Activated T-helper 1 cell treated with anti-CD3 and anti-CD28 coated beads, Interleukin-12 subunit alpha, Interleukin-12 subunit beta, Interleukin-2, Interleukin-4 antibody, amounts not matched to agents 30 ng/mL and 10 ng/mL and 1 ng/mL, durations not matched to agents 14 hours and 24 hours and 36 hours (primary cell): ENCODE measurements at regions of chr6 and their contacts with region 1.

Region 1: DNA sequence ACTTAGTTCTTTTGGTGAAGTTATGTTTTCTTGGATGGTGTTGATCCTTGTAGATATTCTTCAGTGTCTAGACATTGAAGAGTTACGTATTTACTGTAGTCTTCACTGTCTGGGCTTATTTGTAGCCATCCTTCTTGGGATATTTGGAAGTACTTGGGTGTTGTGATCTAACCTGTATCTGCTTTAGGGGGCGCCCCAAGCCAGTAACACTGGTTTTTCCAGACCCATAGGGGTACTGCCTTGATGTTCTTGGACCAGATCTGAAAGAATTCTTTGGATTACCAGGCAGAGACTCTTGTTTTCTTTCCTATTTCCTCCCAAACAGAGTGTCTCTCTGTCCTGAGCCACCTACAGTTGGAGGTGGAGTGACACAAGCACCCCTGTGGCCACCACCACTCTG is 309.1 kb upstream of the IMPG1 start:
- DNase-seq: no peak
- H3K4me3 Mint-ChIP-seq: no peak overlapping the region
- H3K27ac Mint-ChIP-seq: no peak overlapping the region
- H3K4me1 Mint-ChIP-seq: no peaks in the 10 kb centered on the region
- H3K27me3 Mint-ChIP-seq: no peaks in the 10 kb centered on the region

Region 2: DNA sequence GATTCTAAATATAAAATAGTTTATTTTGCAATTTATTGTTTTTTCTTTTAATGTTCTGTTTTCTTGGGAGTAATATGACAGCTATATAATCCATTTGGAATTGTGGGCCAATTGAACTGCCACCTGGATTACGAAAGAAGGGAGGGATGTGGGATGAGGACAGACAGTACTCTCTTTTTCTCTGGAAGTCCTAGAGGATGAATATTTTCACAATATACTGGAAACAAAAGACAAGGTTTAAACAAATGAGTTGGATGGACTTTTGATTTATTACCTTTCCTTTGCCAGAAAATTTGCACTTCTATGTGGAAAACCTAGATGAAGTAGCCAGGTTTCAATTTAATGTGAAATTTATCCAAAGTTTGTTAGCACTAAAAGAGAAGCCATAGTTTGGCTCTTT is 16.4 kb after region 1 on chr6:
- intact Hi-C with region 1: loop called (anchors 1 kb)
- DNase-seq: no peak
- H3K4me3 Mint-ChIP-seq: no peak overlapping the region
- H3K27ac Mint-ChIP-seq: no peak overlapping the region
- H3K4me1 Mint-ChIP-seq: no peaks in the 10 kb centered on the region
- H3K27me3 Mint-ChIP-seq: no peaks in the 10 kb centered on the region